Activated CD4-positive, alpha-beta memory T cell treated with anti-CD3 and anti-CD28 coated beads for 36 hours (primary cell): ENCODE measurements at regions of chr16 and their contacts with region 1.

Region 1: DNA sequence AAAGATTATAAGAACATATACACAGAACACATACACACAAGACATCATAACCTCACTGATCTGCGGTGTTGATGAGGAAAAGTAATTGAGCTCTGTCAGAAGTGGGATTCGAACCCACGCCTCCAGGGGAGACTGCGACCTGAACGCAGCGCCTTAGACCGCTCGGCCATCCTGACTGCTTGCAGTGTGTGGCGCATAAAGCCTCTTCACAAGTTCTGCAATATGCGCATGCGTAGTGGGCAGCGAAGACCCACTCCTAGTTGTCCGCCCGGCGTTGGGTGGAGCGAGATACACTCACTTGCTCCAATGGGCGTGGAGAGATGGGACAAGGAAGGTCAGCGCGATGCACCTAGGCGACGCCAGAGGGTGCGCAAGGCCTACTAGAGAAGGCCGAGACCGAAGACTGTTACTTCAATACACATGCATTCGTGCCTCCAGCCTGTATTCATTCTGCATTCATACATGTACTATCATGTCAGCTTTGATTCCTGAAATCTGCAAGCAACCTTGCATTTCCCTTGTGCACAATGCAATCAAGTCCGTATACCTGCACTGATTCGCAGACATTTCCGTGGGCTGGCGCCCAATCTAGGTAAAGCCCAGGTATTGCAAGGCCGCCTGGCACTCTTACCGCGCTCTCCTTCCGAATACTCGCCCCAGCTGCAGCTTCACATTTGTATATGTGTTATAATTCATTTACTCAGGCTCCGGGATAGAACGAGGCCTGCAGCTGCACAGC is 16.1 kb upstream of the PLLP start:
- DNase-seq: peak; percentile 100
- H3K4me3 Mint-ChIP-seq: no peak overlapping the region
- H3K27ac Mint-ChIP-seq: no peak overlapping the region
- H3K4me1 Mint-ChIP-seq: peaks cover 10% of the 10 kb centered on the region
- H3K27me3 Mint-ChIP-seq: no peaks in the 10 kb centered on the region

Region 2: GRCh38 chr16:57185944-57186871 is 114.3 kb before region 1 on chr16 and contains the starts of genes PSME3IP1 and RSPRY1:
- CTCF ChIA-PET with region 1: interaction called, 5 read pairs
- POLR2A ChIA-PET with region 1: no interaction called
- intact Hi-C with region 1: loop called (anchors 1 kb)
- DNase-seq: peak; percentile 100
- H3K4me3 Mint-ChIP-seq: peak within 1 kb of the TSS; percentile 92
- H3K27ac Mint-ChIP-seq: peak within 1 kb of the TSS; percentile 81
- H3K4me1 Mint-ChIP-seq: peaks cover 36% of the 10 kb centered on the region
- H3K27me3 Mint-ChIP-seq: no peaks in the 10 kb centered on the region
- total RNA-seq, gene PSME3IP1: 101 to 102 TPM
- total RNA-seq, gene RSPRY1: 31.5 to 33.3 TPM

Region 3: GRCh38 chr16:57314161-57314785 is 13.7 kb after region 1 on chr16:
- CTCF ChIA-PET with region 1: interaction called, 11 read pairs
- POLR2A ChIA-PET with region 1: interaction called, 3 read pairs
- intact Hi-C with region 1: no loop called
- DNase-seq: no peak
- H3K4me3 Mint-ChIP-seq: no peak overlapping the region
- H3K27ac Mint-ChIP-seq: no peak overlapping the region
- H3K4me1 Mint-ChIP-seq: peaks cover 18% of the 10 kb centered on the region
- H3K27me3 Mint-ChIP-seq: peaks cover 1% of the 10 kb centered on the region

Region 4: GRCh38 chr16:57383276-57384247 is 83.0 kb after region 1 on chr16:
- CTCF ChIA-PET with region 1: no interaction called
- POLR2A ChIA-PET with region 1: no interaction called
- intact Hi-C with region 1: no loop called
- DNase-seq: no peak
- H3K4me3 Mint-ChIP-seq: no peak overlapping the region
- H3K27ac Mint-ChIP-seq: no peak overlapping the region
- H3K4me1 Mint-ChIP-seq: peaks cover 5% of the 10 kb centered on the region
- H3K27me3 Mint-ChIP-seq: no peaks in the 10 kb centered on the region

Region 5: GRCh38 chr16:57422026-57422944 is 121.7 kb after region 1 on chr16:
- CTCF ChIA-PET with region 1: interaction called, 210 read pairs
- POLR2A ChIA-PET with region 1: interaction called, 6 read pairs
- intact Hi-C with region 1: loop called (anchors 1 kb)
- DNase-seq: no peak
- H3K4me3 Mint-ChIP-seq: no peak overlapping the region
- H3K27ac Mint-ChIP-seq: no peak overlapping the region
- H3K4me1 Mint-ChIP-seq: peaks cover 6% of the 10 kb centered on the region
- H3K27me3 Mint-ChIP-seq: no peaks in the 10 kb centered on the region

Region 6: GRCh38 chr16:57475711-57476339 is 175.3 kb after region 1 on chr16:
- CTCF ChIA-PET with region 1: no interaction called
- POLR2A ChIA-PET with region 1: no interaction called
- intact Hi-C with region 1: loop called (anchors 1 kb)
- DNase-seq: peak; percentile 96
- H3K4me3 Mint-ChIP-seq: peak overlapping the region; percentile 6
- H3K27ac Mint-ChIP-seq: peak overlapping the region; percentile 45
- H3K4me1 Mint-ChIP-seq: peaks cover 14% of the 10 kb centered on the region
- H3K27me3 Mint-ChIP-seq: no peaks in the 10 kb centered on the region

Region 7: DNA sequence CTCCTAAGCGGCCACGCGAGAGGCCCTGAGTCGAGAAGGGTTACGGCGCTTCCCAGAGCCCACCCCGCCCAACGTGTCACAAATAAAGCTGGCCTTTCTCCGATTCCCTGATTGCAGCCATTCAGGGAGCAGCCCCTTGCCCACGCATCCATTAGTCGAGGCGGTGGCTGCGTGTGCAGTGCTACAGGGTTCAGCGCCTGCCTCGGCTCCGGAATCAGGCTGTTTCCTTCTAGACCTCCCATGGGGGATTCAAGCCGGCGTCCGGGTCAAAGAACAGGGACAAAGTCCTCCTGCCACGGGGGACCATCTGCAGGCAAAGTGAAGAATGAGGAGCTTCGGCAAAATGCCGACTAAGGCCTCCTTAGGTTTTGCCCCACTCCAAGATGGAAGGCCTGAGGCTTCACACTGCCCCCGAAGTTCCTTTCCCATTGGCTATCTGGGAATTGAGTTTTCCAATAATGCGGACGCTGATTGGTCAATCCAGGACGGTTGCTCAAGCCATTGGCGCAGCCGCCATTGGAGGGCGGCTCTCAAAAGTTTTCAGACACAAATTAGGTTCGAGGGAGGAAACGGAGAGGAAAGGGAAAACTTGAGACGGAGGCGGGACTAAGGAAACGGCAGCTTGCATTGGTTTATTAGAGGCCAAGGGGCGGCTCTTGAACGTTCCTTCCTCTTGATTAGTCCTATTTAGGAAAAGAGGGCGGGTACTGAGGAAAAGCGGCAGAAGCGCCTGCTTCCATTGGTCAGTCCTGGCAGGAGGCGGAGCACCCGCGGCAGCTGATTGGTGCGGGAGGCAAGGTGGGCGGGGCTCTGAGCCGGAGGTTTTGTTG is 434.6 kb after region 1 on chr16:
- CTCF ChIA-PET with region 1: no interaction called
- POLR2A ChIA-PET with region 1: no interaction called
- intact Hi-C with region 1: loop called (anchors 1 kb)
- DNase-seq: peak; percentile 98
- H3K4me3 Mint-ChIP-seq: peak overlapping the region; percentile 99
- H3K27ac Mint-ChIP-seq: peak overlapping the region; percentile 87
- H3K4me1 Mint-ChIP-seq: peaks cover 27% of the 10 kb centered on the region
- H3K27me3 Mint-ChIP-seq: peaks cover 2% of the 10 kb centered on the region